PC-9 (cell line): ENCODE measurements at regions of chr7 and their contacts with region 1.

Region 1: GRCh38 chr7:130896898-130897514 is 163.0 kb upstream of the KLF14 start:
- DNase-seq: peak; percentile 50 to 66
- H3K4me3 ChIP-seq: no peak overlapping the region
- H3K27ac ChIP-seq: peak overlapping the region; percentile 99
- H3K4me1 ChIP-seq: peaks cover 97% of the 10 kb centered on the region
- H3K27me3 ChIP-seq: no peaks in the 10 kb centered on the region
- CTCF ChIP-seq: peak; percentile 60

Region 2: DNA sequence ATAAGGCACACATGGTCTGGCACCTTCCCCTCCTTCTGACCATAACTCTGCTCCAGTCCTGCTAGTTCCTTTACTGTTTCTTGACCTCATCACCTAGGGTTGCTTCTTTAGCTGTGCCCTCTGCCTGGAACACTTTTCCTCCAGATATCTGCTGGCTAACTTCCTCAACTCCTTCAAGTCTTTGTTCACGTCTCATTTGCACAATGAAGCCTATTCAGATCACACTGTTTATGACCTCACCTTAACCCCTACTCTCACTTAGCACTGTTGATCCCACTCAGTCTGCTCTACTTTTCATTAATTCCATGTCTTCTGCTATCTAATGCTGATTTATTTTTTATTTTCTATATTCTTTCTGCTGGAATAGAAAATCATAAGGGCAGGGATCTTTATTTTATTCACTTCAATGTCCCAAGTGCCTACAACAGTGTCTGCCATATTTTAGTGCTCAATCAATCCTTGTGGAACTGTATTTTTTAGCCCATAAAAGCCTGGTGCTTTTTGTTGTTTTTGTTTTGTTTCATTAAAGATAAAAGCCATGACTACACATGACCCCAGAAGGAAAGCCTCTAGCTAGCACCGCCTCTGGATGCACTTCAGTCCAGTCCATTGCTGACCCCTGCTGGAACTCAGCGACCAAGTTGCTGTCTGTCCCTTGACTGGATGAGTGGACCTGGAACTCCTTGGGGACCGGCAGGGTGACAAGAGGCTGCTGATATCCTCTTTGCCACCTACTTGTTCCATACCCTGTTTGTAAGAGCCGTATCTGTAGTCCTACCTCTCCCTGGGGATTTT is 175.3 kb before region 1 on chr7:
- CTCF ChIA-PET with region 1: no interaction called
- POLR2A ChIA-PET with region 1: no interaction called
- intact Hi-C with region 1: no loop called
- DNase-seq: peak; percentile 64 to 65
- H3K4me3 ChIP-seq: no peak overlapping the region
- H3K27ac ChIP-seq: no peak overlapping the region
- H3K4me1 ChIP-seq: no peaks in the 10 kb centered on the region
- H3K27me3 ChIP-seq: no peaks in the 10 kb centered on the region
- CTCF ChIP-seq: peak; percentile 67

Region 3: DNA sequence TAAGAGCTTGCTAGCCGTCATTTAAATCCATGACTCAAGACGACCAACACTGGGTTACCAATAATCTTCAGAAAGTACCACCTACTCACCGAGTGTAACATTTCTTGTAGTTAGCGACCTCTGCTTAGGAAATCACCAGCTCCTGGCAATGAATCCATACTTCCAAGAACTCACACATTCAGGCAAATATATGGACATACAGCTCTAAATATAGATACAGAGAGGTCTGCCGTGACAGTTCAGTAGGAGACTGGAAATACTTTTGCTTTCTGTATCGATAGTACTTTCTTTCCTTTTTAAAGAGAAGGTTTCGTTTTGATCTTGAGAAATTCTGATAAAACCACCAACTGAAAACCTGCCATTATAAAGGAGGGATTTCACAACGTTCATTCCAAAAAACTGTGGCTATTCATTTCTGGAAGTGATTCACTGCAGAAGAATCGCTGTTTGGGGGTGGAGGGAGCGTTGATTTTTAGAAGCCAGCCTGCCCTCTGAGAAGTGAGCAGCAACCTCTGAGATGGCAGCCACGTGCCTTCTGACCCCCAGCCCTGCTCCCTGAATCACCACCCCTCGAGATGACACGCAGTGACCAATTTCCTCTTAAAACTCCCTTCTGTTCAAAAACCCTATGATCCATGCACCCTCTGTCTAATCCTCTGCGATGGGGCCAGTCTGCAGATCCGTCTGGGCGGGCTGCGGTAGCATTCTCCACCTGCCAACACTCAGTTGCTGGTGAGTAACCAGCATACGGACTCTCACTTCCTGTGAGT is 16.0 kb after region 1 on chr7:
- CTCF ChIA-PET with region 1: interaction called, 13 read pairs
- POLR2A ChIA-PET with region 1: interaction called, 15 read pairs
- intact Hi-C with region 1: loop called (anchors 1 kb)
- DNase-seq: peak; percentile 89 to 97
- H3K4me3 ChIP-seq: peak overlapping the region; percentile 96
- H3K27ac ChIP-seq: peak overlapping the region; percentile 99
- H3K4me1 ChIP-seq: peaks cover 58% of the 10 kb centered on the region
- H3K27me3 ChIP-seq: no peaks in the 10 kb centered on the region
- CTCF ChIP-seq: no peak

Region 4: GRCh38 chr7:130996841-130997231 is 99.8 kb after region 1 on chr7:
- CTCF ChIA-PET with region 1: interaction called, 10 read pairs
- POLR2A ChIA-PET with region 1: interaction called, 8 read pairs
- intact Hi-C with region 1: no loop called
- DNase-seq: peak; percentile 81 to 98
- H3K4me3 ChIP-seq: peak overlapping the region; percentile 18; the same call in 1 of the 2 replicates
- H3K27ac ChIP-seq: peak overlapping the region; percentile 79
- H3K4me1 ChIP-seq: peaks cover 71% of the 10 kb centered on the region
- H3K27me3 ChIP-seq: no peaks in the 10 kb centered on the region
- CTCF ChIP-seq: no peak

Region 5: DNA sequence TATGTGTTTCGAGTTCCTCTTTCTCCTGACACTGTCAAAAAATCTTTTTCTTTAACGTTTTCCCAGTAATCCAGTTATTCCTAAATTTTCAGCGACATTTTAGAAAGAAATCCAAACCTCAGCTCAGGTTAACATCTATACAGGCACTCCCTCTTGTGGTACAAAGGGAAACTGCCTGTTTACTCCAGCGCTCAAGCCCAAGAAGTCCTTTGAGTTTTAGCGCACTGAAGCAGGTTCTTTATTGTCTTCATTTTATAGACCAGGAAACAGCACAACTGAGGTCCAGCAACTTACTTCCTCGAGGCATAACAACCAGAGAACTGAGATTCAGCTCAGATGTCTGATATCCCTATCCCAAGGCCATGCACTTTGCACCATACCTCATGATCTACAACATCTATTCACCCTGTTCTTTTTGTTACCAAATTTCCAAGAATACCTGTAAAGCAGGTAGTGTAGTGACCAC is 143.5 kb after region 1 on chr7:
- CTCF ChIA-PET with region 1: interaction called, 11 read pairs
- POLR2A ChIA-PET with region 1: interaction called, 3 read pairs
- intact Hi-C with region 1: loop called (anchors 1 kb)
- DNase-seq: peak; percentile 51 to 77
- H3K4me3 ChIP-seq: no peak overlapping the region
- H3K27ac ChIP-seq: no peak overlapping the region; the same call in 1 of the 2 replicates
- H3K4me1 ChIP-seq: no peaks in the 10 kb centered on the region; the same call in none of the 2 replicates
- H3K27me3 ChIP-seq: no peaks in the 10 kb centered on the region
- CTCF ChIP-seq: peak; percentile 96

Region 6: GRCh38 chr7:131538071-131538790 is 641.2 kb after region 1 on chr7:
- CTCF ChIA-PET with region 1: no interaction called
- POLR2A ChIA-PET with region 1: no interaction called
- intact Hi-C with region 1: loop called (anchors 10 kb)
- DNase-seq: peak; percentile 94 to 97
- H3K4me3 ChIP-seq: no peak overlapping the region; the same call in 1 of the 2 replicates
- H3K27ac ChIP-seq: peak overlapping the region; percentile 83
- H3K4me1 ChIP-seq: peaks cover 48% of the 10 kb centered on the region
- H3K27me3 ChIP-seq: no peaks in the 10 kb centered on the region
- CTCF ChIP-seq: no peak